PC-9 (cell line): ENCODE measurements at regions of chr4 and their contacts with region 1.

Region 1: DNA sequence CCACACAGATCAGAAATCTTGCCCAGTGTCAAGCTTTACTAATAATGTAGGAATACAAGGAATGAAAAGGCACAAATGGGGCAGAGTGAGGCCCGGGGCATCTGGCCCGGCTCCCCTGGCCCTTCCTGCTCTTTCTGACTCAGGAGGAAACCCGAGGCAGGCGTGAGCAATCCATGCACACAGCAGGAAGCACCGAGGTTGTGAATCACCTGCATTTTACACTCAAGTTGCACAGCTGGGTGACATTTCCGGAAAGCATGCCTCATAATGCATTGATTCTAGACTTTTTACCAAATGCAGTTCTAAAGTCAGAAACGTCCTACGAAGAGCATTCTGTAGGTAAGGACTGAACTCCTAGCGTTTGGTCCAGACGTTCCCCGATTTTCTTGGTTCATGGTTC is 38.9 kb downstream of the PRIMPOL start:
- DNase-seq: peak; percentile 71 to 88
- H3K4me3 ChIP-seq: no peak overlapping the region
- H3K27ac ChIP-seq: peak overlapping the region; percentile 81
- H3K4me1 ChIP-seq: peaks cover 17% of the 10 kb centered on the region
- H3K27me3 ChIP-seq: no peaks in the 10 kb centered on the region
- CTCF ChIP-seq: no peak

Region 2: DNA sequence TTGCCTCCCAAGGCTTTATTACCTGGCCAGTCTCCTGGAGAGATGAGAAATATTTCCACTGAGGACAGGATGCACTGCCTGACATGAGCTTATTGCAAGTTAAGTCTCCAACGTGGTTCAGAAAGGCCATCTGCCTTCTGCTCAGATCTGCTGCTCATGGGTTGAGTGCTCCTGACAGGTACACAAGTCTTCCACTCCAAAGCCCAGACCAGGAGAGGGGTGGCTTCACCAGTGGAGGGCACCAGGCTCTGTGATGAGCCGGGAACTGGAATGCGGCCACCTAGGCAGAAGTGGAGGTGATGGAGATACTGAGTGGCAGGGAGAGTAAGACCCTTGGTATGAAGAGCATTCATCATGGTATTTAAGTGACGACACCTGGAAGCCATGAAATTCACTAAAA is 134.6 kb before region 1 on chr4:
- CTCF ChIA-PET with region 1: no interaction called
- POLR2A ChIA-PET with region 1: no interaction called
- intact Hi-C with region 1: no loop called
- DNase-seq: no peak
- H3K4me3 ChIP-seq: no peak overlapping the region
- H3K27ac ChIP-seq: no peak overlapping the region
- H3K4me1 ChIP-seq: no peaks in the 10 kb centered on the region
- H3K27me3 ChIP-seq: no peaks in the 10 kb centered on the region
- CTCF ChIP-seq: no peak

Region 3: DNA sequence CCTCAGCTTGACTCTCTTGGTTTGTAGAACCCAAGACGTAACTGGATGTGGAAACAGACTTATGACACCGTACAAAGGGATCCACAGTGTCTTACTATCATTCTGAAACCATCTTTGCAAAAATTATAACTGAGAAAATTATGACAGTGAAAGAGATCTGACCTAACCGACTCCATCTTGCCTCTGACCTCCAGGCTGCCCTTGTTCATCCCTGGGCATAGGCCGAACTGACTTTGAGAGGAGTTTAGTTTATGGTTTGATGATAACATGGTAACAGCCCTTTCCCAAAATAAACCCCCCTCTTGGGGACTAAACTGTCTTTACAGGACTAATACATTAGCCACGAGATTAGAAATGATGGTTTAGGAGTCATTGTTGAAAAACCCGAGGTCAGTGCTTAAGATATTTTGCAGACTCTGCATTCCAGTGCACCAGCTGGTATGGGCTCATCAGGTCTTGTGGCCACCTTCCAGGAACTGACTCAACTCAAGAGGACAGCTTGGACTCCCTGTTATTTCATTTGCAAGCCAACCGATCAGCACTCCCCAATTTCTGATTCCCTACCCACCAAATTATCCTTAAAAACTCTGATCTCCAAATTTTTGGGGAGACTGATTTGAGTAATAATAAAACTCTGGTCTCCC is 88.8 kb before region 1 on chr4:
- CTCF ChIA-PET with region 1: no interaction called
- POLR2A ChIA-PET with region 1: no interaction called
- intact Hi-C with region 1: loop called (anchors 2 kb)
- DNase-seq: peak in 1 of 2 experiments; percentile 15
- H3K4me3 ChIP-seq: no peak overlapping the region
- H3K27ac ChIP-seq: no peak overlapping the region
- H3K4me1 ChIP-seq: peaks cover 4% of the 10 kb centered on the region; the same call in 1 of the 2 replicates
- H3K27me3 ChIP-seq: no peaks in the 10 kb centered on the region
- CTCF ChIP-seq: no peak

Region 4: DNA sequence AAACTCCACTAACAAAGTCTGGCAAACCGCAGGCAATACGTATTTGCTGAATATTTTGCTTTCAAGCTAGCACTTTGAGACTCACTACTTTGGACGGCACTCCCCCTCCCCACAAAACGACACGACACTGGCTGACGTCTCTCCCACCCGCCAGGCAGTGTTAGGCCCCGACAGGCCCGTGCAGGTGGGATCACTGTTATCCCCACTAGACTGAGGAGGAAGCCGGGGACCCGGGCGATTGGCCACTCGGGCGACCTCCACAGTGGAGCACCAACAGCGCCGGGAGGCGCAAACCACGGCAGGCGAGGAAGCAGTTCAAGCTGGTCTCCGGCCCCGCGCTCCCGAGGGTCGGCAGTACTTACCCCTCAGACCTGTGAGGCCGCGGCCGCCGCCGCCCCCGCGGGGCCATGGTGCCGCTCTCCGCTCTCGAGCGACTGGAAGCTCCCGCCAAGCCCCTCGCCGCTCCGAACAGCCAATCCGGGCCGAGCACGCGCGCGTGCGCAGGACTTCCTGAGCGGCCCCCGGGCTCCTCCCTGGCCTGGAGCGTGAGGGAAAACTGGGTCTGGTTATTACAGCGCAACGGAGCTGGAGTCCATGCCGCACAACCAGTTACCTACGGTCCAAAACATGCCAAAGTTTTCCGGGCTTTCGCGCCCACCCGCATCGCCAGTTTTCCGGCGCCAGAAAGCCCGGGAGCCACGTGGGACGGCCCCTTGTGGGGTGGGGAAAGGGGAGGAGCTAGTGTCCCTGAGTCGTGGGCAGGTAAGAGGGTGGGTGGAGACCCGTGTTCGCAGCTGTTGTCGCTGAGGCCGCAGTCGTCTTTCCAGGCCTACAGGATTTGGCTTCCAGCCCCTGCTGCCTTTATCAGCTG is 45.4 kb after region 1 on chr4 and contains the start of gene CENPU:
- CTCF ChIA-PET with region 1: no interaction called
- POLR2A ChIA-PET with region 1: no interaction called
- intact Hi-C with region 1: loop called (anchors 2 kb)
- DNase-seq: peak; percentile 90 to 98
- H3K4me3 ChIP-seq: peak within 1 kb of the TSS; percentile 95
- H3K27ac ChIP-seq: peak within 1 kb of the TSS; percentile 73
- H3K4me1 ChIP-seq: peaks cover 19% of the 10 kb centered on the region
- H3K27me3 ChIP-seq: no peaks in the 10 kb centered on the region
- CTCF ChIP-seq: no peak
- total RNA-seq, gene CENPU: 25.5 and 47.7 TPM in 2 replicates